Activated CD8-positive, alpha-beta T cell treated with anti-CD3 and anti-CD28 coated beads, Interleukin-2, amount 10 ng/mL, durations not matched to agents 7 days and 5 days (primary cell): ENCODE measurements at regions of chr1 and their contacts with region 1.

Region 1: GRCh38 chr1:119808972-119809550 is 2.2 kb downstream of the REG4 start:
- DNase-seq: peak; percentile 84
- ATAC-seq: peak; percentile 97
- H3K4me3 Mint-ChIP-seq: no peak overlapping the region
- H3K27ac Mint-ChIP-seq: no peak overlapping the region
- H3K4me1 Mint-ChIP-seq: peaks cover 9% of the 10 kb centered on the region
- H3K27me3 Mint-ChIP-seq: peaks cover 39% of the 10 kb centered on the region

Region 2: DNA sequence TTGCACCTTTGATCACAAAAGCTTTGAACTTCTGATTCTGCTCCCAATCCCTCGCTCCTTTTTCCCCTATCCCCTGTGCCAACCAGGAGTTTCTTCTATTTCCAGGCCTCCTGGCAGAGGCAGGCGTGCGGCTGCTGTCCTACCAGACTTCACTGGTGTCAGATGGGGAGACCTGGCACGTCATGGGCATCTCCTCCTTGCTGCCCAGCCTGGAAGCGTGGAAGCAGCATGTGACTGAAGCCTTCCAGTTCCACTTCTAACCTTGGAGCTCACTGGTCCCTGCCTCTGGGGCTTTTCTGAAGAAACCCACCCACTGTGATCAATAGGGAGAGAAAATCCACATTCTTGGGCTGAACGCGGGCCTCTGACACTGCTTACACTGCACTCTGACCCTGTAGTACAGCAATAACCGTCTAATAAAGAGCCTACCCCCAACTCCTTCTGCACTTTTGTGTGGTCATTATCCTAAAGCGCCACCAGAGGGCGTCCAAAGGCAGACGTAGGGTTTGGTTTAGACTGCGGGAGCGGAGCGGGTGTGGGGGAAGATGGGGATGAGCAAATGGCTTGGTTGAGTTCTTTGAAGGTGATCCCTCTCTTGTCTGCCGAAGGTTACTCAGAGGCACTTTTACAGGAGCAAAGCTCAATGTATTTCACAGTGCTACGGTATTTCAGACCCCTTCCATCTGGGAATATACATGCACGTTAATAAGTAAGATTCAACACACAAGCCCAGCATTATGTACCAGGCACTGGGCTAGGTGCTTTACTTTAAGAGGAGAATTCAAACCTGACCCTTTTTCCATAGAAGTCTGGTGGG is 65.1 kb before region 1 on chr1:
- CTCF ChIA-PET with region 1: interaction called, 48 read pairs
- POLR2A ChIA-PET with region 1: no interaction called
- DNase-seq: peak; percentile 72
- ATAC-seq: peak; percentile 81
- H3K4me3 Mint-ChIP-seq: no peak overlapping the region
- H3K27ac Mint-ChIP-seq: peak overlapping the region; percentile 22
- H3K4me1 Mint-ChIP-seq: peaks cover 17% of the 10 kb centered on the region
- H3K27me3 Mint-ChIP-seq: no peaks in the 10 kb centered on the region

Region 3: GRCh38 chr1:119795261-119796200 is 13.5 kb before region 1 on chr1:
- CTCF ChIA-PET with region 1: interaction called, 20 read pairs
- POLR2A ChIA-PET with region 1: interaction called, 3 read pairs
- DNase-seq: no peak
- ATAC-seq: no peak
- H3K4me3 Mint-ChIP-seq: no peak overlapping the region
- H3K27ac Mint-ChIP-seq: no peak overlapping the region
- H3K4me1 Mint-ChIP-seq: peaks cover 50% of the 10 kb centered on the region
- H3K27me3 Mint-ChIP-seq: peaks cover 10% of the 10 kb centered on the region

Region 4: DNA sequence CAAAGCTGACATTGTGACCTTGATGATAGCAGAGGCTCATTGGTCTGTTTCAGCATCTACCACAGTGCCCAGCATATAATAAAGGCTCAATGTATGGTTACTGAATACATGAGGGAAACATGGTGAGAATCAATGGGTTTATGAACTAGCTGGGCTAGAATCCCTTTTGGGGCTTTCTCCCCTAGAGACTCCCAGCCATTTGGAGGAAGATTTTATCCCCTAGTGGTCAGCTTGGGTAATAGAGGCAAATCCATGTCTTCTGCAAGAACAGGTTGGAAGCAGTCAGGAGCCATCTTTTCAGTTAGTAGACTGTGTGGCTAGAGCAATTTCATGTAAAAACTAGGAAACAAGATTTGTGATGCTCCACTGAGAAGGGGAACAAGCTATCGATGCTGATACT is 17.9 kb after region 1 on chr1:
- CTCF ChIA-PET with region 1: interaction called, 34 read pairs
- POLR2A ChIA-PET with region 1: no interaction called
- DNase-seq: no peak
- ATAC-seq: no peak
- H3K4me3 Mint-ChIP-seq: no peak overlapping the region
- H3K27ac Mint-ChIP-seq: no peak overlapping the region
- H3K4me1 Mint-ChIP-seq: no peaks in the 10 kb centered on the region
- H3K27me3 Mint-ChIP-seq: peaks cover 37% of the 10 kb centered on the region

Region 5: GRCh38 chr1:119870917-119871596 is 62.0 kb after region 1 on chr1:
- CTCF ChIA-PET with region 1: interaction called, 16 read pairs
- POLR2A ChIA-PET with region 1: interaction called, 3 read pairs
- DNase-seq: peak; percentile 86
- ATAC-seq: peak; percentile 78
- H3K4me3 Mint-ChIP-seq: no peak overlapping the region
- H3K27ac Mint-ChIP-seq: no peak overlapping the region
- H3K4me1 Mint-ChIP-seq: peaks cover 18% of the 10 kb centered on the region
- H3K27me3 Mint-ChIP-seq: peaks cover 49% of the 10 kb centered on the region